ENCODE measurements at regions of chr18 and their contacts with region 1.

Region 1: GRCh38 chr18:36095936-36096519 is 28.7 kb upstream of the RPRD1A start:
- H3K4me3 Mint-ChIP-seq: no peak overlapping the region
- H3K27ac Mint-ChIP-seq: no peak overlapping the region
- H3K4me1 Mint-ChIP-seq: no peaks in the 10 kb centered on the region
- H3K27me3 Mint-ChIP-seq: peaks cover 4% of the 10 kb centered on the region

Region 2: GRCh38 chr18:36284671-36285295 is 188.8 kb after region 1 on chr18:
- intact Hi-C with region 1: loop called (anchors 1 kb)
- H3K4me3 Mint-ChIP-seq: no peak overlapping the region
- H3K27ac Mint-ChIP-seq: no peak overlapping the region
- H3K4me1 Mint-ChIP-seq: no peaks in the 10 kb centered on the region
- H3K27me3 Mint-ChIP-seq: peaks cover 22% of the 10 kb centered on the region

Region 3: DNA sequence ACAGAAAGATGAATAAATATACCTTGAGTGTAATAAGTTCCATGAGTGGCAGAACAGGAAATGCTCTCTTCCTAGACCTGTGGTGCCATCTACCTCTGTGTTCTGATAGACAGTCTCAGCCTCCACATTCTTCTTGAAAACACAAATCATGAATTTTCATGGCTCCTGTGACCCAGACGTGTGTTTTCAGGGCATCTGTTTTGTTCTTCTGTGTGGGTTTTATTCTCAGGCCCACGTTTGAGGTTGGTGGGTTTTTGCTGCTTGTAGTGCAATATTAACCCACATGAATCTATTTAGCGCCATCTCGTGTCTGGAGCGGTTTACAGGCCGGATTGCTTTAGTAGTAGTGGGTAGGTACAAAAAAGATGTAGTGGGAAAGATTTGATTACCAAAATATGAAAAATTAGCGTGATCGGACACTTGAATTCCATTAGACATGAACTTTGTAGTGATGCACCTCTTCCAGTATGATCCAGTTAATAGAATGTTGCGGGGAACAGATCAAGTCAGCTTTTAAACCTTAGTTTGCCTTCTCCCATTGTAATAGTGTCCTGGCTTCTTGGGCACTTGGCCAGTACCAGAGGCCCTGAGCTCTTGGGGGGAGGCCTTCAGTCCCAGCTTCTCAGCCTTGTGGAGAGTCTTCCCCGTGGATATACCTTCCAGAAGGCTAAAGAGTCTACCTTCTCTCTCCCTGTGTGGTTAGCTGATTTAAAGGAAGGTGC is 476.3 kb after region 1 on chr18:
- intact Hi-C with region 1: loop called (anchors 5 kb)
- H3K4me3 Mint-ChIP-seq: no peak overlapping the region
- H3K27ac Mint-ChIP-seq: no peak overlapping the region
- H3K4me1 Mint-ChIP-seq: no peaks in the 10 kb centered on the region
- H3K27me3 Mint-ChIP-seq: peaks cover 5% of the 10 kb centered on the region

Region 4: GRCh38 chr18:36809590-36810381 is 713.8 kb after region 1 on chr18:
- intact Hi-C with region 1: loop called (anchors 5 kb)
- H3K4me3 Mint-ChIP-seq: no peak overlapping the region
- H3K27ac Mint-ChIP-seq: no peak overlapping the region
- H3K4me1 Mint-ChIP-seq: peaks cover 5% of the 10 kb centered on the region
- H3K27me3 Mint-ChIP-seq: no peaks in the 10 kb centered on the region